ENCODE measurements at regions of chr20 and their contacts with region 1.

Region 1: DNA sequence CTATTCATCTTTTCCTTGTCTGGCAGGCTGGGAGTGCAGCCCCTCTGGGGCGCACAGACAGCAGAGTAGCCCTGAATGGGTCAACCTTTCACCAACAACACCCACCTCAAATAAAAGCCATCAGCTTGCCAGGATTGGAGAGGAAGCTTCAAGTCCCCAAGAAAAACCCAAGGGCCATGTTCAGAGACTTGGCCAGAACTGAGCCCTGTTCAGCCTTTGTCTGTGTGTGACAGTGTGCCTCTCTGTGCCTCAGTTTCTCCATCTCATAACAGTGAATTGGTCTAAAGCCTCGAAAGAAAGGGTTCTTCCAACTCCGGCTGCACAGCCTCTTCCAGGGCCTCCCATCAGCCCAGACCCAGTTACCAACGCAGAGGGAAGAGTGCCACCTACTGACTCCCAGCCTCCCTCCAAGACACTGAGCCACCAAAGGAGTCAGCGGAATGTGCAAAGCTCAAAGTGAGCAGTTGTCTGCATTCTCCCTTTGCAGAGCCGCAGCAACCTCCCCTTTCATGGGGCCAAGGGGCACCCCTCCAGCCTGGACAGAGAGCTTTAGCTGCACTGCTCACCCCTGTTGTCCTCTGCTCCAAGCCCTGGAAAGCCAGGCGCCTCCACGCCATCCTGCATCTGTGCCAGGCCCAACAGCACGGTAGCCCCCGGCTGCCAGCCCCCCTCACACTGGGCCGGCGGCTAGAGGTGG is 82.7 kb upstream of the TOP1 start:
- DNase-seq: peak; percentile 83
- H3K4me3 ChIP-seq: no peak overlapping the region
- H3K27ac ChIP-seq: no peak overlapping the region
- H3K4me1 ChIP-seq: no peaks in the 10 kb centered on the region; a peak in 1 of 4 replicates
- H3K27me3 ChIP-seq: no peaks in the 10 kb centered on the region
- CTCF ChIP-seq: peak; percentile 54
- EP300 ChIP-seq: no peak
- RAD21 ChIP-seq: peak; percentile 95

Region 2: DNA sequence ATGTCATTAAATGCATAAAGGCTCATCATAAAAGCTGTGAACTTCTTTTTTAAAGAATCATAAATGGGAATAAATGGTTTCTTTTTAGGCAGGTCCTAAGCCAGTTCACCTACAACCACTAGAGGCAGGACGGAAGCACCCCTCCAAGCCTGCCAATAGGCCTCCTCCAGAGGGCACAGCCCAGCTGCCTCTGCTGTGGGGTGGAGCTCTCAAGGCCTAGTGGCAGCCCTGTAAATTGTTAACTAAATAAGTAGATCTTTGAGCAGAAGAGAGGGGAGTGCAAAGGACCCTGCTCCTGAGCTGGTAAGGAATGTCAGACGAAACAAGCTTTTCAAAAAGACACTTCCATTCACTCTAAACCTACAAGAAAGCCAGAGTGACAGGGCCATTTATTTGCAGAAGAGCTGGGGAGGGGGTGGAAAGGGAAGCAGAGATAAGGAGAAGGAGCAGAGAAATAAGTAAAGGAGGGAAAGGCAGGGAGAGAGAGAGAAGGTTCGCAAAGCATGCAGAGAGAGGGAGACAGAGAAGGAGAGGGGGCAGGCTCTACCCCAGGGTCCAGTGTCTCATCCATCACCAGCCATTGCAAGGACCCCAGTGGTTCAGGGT is 238.8 kb before region 1 on chr20:
- CTCF ChIA-PET with region 1: interaction called, 10 read pairs
- POLR2A ChIA-PET with region 1: no interaction called
- DNase-seq: no peak
- H3K4me3 ChIP-seq: no peak overlapping the region
- H3K27ac ChIP-seq: no peak overlapping the region
- H3K4me1 ChIP-seq: no peaks in the 10 kb centered on the region; a peak in 1 of 4 replicates
- H3K27me3 ChIP-seq: no peaks in the 10 kb centered on the region
- CTCF ChIP-seq: no peak
- EP300 ChIP-seq: no peak
- RAD21 ChIP-seq: 0 out of 2 replicates have a peak, but pooled peaks have one; percentile 6

Region 3: GRCh38 chr20:40797425-40797824 is 148.5 kb before region 1 on chr20:
- CTCF ChIA-PET with region 1: interaction called, 76 read pairs
- POLR2A ChIA-PET with region 1: no interaction called
- DNase-seq: no peak
- H3K4me3 ChIP-seq: no peak overlapping the region; a peak in 1 of 4 replicates
- H3K27ac ChIP-seq: no peak overlapping the region
- H3K4me1 ChIP-seq: no peaks in the 10 kb centered on the region
- H3K27me3 ChIP-seq: no peaks in the 10 kb centered on the region
- CTCF ChIP-seq: peak; percentile 51
- EP300 ChIP-seq: no peak
- RAD21 ChIP-seq: peak; percentile 71

Region 4: DNA sequence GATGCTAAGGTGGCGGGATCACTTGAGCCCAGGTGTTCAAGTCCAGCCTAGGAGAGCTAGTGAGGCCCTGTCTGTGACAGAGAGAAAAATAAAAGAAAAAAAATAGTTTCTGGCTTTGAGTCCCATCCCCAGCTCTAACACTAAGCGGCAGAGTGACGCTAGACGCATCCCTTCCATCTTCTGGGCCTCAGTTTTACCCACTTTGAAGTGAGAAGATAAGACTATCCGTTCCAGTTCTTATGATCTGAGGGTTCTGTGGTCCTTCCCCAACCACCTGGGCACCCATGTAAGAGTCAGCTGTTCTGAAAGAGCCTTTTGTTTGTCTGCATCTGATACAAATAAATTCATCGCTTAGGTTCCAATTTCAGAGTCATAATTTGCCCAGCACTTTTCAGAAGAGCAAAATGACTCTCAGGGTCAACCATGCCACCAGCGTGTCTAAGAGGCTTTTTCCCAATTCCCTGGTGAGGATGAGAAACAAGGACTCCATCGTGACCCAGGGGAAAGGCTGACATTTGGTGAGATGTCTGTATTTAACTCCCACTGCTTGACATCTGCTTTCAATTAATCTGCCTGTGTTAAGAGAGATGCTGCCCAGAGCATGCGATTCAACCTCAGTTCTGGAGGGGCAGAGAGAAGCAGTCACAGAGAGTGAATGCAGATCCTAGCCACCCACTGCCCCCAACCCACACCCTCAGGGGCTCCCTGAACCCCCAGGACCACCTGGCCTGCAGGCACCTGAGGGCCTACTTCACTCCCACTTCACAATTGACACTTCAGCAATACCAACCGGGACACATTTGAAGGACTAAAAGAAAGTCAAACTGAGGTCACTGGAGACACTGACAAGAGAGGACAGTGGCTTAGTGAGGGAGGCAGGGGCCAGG is 48.8 kb before region 1 on chr20:
- CTCF ChIA-PET with region 1: interaction called, 36 read pairs
- POLR2A ChIA-PET with region 1: no interaction called
- DNase-seq: peak; percentile 80
- H3K4me3 ChIP-seq: no peak overlapping the region
- H3K27ac ChIP-seq: peak overlapping the region in 1 of 2 experiments; percentile 90; a peak in 2 of 4 replicates
- H3K4me1 ChIP-seq: peaks cover 0 to 18% of the 10 kb centered on the region in 2 experiments; a peak in 2 of 4 replicates
- H3K27me3 ChIP-seq: 0 out of 2 replicates have a peak, but pooled peaks cover 3% of the 10 kb centered on the region
- CTCF ChIP-seq: no peak
- EP300 ChIP-seq: peak in 1 of 2 experiments; percentile 72; a peak in 1 of 4 replicates
- RAD21 ChIP-seq: no peak; the same call in none of the 2 replicates

Region 5: DNA sequence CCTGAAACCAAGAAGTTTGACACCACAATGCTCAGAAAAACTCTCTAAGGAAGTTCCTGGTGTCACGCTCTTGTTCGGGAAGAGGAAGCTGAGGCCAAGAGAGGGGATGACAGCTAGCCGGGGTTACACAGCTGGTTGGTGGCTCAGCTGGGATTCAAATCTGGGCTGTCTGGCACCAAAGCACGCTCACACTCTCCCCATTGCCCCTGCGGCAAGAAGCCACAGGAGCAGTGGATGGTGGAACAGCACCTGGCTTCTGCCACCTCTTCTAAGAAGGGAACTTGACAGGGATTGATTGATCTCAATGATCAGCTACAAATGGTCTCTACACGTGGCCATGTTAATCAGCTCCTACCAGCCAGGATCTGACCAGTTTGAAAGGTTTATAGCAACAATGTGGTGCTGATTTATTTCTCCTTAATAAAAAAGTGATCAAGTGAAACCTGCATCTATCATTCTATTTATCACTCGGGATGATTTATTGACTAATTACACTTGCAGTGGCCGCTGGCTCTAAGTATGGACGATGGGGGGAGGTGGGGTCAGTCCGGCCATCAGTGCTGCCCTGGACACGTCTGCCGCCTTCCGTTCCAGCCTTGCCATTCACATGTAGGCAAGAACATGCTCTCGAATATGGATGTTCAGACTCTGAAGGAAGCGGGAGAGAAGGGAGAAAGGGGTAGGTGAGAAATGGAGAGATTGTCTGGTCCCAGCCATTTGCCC is 10.8 kb after region 1 on chr20:
- CTCF ChIA-PET with region 1: interaction called, 15 read pairs
- POLR2A ChIA-PET with region 1: no interaction called
- DNase-seq: no peak
- H3K4me3 ChIP-seq: no peak overlapping the region
- H3K27ac ChIP-seq: no peak overlapping the region
- H3K4me1 ChIP-seq: no peaks in the 10 kb centered on the region
- H3K27me3 ChIP-seq: no peaks in the 10 kb centered on the region
- CTCF ChIP-seq: no peak
- EP300 ChIP-seq: no peak
- RAD21 ChIP-seq: no peak

Region 6: GRCh38 chr20:41329435-41330342 is 383.8 kb after region 1 on chr20:
- CTCF ChIA-PET with region 1: no interaction called
- POLR2A ChIA-PET with region 1: no interaction called
- DNase-seq: no peak
- H3K4me3 ChIP-seq: no peak overlapping the region
- H3K27ac ChIP-seq: peak overlapping the region; percentile 3 to 93; a peak in 3 of 4 replicates
- H3K4me1 ChIP-seq: peaks cover 0 to 14% of the 10 kb centered on the region in 2 experiments; a peak in 1 of 4 replicates
- H3K27me3 ChIP-seq: no peaks in the 10 kb centered on the region
- CTCF ChIP-seq: no peak
- EP300 ChIP-seq: peak in 1 of 2 experiments; percentile 31; a peak in 1 of 4 replicates
- RAD21 ChIP-seq: no peak

Measured in SK-N-SH (cell line).